Right ventricle myocardium inferior (tissue), 1 donor: ENCODE measurements at regions of chrX and their contacts with region 1.

Region 1: GRCh38 chrX:72018277-72019112 is 107.8 kb downstream of the NHSL2 start:
- DNase-seq: peak; percentile 91
- ATAC-seq: peak; percentile 98

Region 2: GRCh38 chrX:72181178-72182125 is 163.0 kb after region 1 on chrX and contains the start of gene PIN4:
- intact Hi-C with region 1: loop called (anchors 5 kb)
- DNase-seq: peak; percentile 92
- ATAC-seq: peak; percentile 99
- total RNA-seq, gene PIN4: 12.0 TPM